ENCODE measurements at regions of chr7 and their contacts with region 1.

Region 1: GRCh38 chr7:2350861-2351260 is 3.8 kb upstream of the EIF3B start:
- DNase-seq: no peak
- H3K27ac ChIP-seq: peak overlapping the region; percentile 49
- CTCF ChIP-seq: no peak

Region 2: DNA sequence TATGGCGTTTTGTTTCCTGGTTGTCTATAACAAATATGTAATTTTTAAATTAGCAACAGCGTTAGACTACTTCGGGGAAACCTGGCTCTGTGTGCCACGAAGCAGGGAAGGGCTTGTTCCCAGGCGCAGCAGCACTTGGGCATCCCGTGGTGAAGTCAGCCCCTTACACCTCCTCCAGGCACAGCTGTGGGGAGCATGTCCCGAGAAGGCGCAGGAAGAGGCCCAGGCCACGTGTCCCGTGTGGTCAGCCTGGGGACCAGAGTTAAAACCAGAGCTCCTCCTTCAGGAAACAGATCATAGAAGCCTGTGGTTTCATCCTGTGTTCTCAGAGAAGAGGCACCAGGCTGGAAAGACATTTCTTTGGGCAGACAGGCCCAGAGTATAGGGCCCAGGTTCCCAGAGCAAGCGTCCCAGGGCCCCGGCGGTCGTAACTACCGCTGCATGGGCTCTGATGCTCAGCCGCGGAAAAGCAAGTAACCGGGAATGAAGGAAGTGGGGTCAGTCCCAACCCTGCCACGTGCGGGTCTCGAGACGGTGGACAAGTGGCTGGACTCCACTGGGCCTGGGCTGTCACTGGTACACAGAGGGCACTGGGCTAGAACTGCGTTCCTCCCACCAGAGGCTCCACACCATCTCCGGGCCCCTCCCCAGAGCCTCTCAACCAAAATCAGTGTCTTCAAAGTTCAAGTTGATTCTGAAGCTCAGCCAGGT is 101.7 kb before region 1 on chr7:
- CTCF ChIA-PET with region 1: interaction called, 10 read pairs
- POLR2A ChIA-PET with region 1: no interaction called
- DNase-seq: peak; percentile 74
- H3K27ac ChIP-seq: peak overlapping the region; percentile 76
- CTCF ChIP-seq: no peak

Region 3: GRCh38 chr7:2720582-2721491 is 370.0 kb after region 1 on chr7:
- CTCF ChIA-PET with region 1: no interaction called
- POLR2A ChIA-PET with region 1: no interaction called
- DNase-seq: peak; percentile 66
- H3K27ac ChIP-seq: peak overlapping the region; percentile 22
- CTCF ChIP-seq: no peak

Measured in RWPE1 (cell line).